ENCODE measurements at regions of chr6 and their contacts with region 1.

Region 1: DNA sequence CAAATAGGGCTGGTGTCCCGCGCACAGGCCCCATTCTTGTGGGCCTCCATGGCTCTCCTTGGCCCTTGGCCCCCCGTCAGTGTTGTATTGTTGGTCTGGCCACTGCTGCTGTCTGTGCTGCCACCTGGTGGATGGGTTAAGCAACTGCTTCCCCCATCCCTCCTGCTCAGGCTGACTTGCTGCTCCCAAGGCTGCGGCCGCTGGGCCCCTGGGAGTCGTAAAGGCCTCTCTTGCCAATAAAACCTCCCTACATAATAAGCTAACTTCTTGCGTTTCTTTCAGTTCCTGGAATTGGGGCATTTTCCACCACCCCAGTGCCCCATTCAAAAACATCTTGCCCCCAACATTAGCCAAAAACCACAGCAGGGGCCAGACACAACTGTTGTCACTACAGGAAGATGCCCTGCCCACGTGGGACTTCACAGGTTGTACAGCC is 27.1 kb downstream of the CD83 start:
- DNase-seq: peak; percentile 94

Region 2: DNA sequence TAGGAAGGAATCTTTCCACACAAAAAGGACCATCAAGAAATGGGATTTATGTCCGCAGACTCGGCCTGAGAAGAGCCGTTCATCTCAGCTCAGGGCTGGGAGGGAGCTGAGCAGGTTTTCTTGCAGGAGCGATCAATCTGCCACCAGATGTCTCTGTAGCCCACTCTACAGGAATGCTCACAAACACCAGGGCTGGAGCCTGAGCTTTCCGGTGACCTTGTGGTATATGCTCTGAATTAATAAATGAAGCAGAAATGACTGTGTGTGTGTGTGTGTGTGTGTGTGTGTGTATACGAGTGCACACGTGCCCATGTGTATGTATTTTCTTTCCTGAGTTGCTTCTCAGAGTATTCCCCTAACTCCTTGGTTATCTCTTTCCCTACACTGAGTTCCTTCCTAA is 15.1 kb before region 1 on chr6:
- CTCF ChIA-PET with region 1: interaction called, 17 read pairs
- POLR2A ChIA-PET with region 1: no interaction called
- DNase-seq: peak; percentile 74